A549 (cell line): ENCODE measurements at regions of chr7 and their contacts with region 1.

Region 1: GRCh38 chr7:77425101-77426051 is 9.2 kb upstream of the GSAP start:
- DNase-seq: peak; percentile 53
- ATAC-seq: peak; percentile 81 to 83
- H3K4me3 ChIP-seq: peak overlapping the region; percentile 16; the same call in 2 of the 3 replicates
- H3K27ac ChIP-seq: peak overlapping the region; percentile 70 to 81
- H3K4me1 ChIP-seq: peaks cover 37% of the 10 kb centered on the region
- CTCF ChIP-seq: no peak
- EP300 ChIP-seq: no peak
- POLR2A ChIP-seq: no peak
- RAD21 ChIP-seq: no peak

Region 2: GRCh38 chr7:77409739-77410547 is 15.4 kb before region 1 on chr7:
- CTCF ChIA-PET with region 1: interaction called, 9 read pairs
- POLR2A ChIA-PET with region 1: interaction called, 10 read pairs
- DNase-seq: peak in 1 of 2 experiments; percentile 83
- ATAC-seq: peak; percentile 79 to 84
- H3K4me3 ChIP-seq: peak overlapping the region; percentile 29; the same call in 1 of the 3 replicates
- H3K27ac ChIP-seq: peak overlapping the region; percentile 87 to 96
- H3K4me1 ChIP-seq: peaks cover 75% of the 10 kb centered on the region
- CTCF ChIP-seq: no peak
- EP300 ChIP-seq: peak; percentile 72 to 86; a peak in 3 of 5 replicates
- POLR2A ChIP-seq: no peak
- RAD21 ChIP-seq: no peak

Region 3: DNA sequence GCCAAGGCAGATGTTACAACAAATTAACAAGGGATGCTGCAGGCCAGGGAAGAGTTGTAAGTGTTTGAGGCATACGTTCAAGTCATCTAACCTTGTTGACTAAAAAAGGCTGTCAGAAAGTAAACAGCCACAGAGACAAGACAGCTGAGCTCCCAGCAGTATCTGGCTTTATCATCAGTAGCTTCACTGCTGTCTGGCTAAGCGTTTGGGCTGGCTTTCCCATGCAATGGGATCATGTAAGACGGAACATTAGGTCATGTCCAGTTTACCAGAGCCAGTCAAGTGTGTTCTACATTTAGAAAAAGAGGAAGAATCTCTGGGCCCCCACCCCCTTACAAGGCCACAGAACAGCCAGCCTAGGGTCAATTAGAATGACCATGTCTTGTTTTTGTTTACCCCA is 42.0 kb after region 1 on chr7:
- CTCF ChIA-PET with region 1: no interaction called
- POLR2A ChIA-PET with region 1: no interaction called
- DNase-seq: no peak
- ATAC-seq: no peak
- H3K4me3 ChIP-seq: no peak overlapping the region
- H3K27ac ChIP-seq: peak overlapping the region in 1 of 2 experiments; percentile 4; a peak in 2 of 6 replicates
- H3K4me1 ChIP-seq: peaks cover 17% of the 10 kb centered on the region
- CTCF ChIP-seq: no peak
- EP300 ChIP-seq: no peak
- POLR2A ChIP-seq: no peak
- RAD21 ChIP-seq: no peak